ENCODE measurements at regions of chr7 and their contacts with region 1.

Region 1: DNA sequence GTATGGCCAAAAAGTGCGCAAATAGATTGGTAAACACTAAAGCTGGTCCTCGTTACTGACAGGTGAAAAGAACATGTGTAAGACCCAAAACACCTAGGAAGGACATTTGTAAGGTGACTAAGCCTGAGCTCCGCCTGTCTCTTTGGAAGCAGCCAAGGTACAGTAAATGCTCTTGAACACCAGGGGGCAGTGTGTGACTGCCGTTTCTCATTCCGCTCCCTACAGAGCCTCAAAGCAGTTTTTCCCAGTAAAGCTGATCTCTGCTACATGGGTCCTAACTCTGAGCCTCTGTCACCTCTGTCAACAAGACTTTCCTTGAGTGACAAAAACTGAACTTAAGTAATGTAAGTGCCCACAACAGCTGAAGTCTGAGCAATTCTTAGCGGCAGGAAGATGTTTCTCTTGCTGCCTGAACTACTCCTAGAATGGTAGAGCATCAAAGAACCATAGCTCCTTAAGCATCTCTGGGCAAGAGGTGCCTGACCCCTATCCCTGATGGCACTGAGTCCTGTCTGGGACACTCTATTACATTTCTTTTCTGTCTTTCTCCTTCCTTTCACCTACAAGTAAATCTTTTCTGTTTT is 238.0 kb upstream of the INHBA start:
- DNase-seq: peak; percentile 35
- ATAC-seq: peak; percentile 67
- H3K4me3 Mint-ChIP-seq: peak overlapping the region; percentile 51
- H3K27ac Mint-ChIP-seq: no peak overlapping the region
- H3K4me1 Mint-ChIP-seq: peaks cover 27% of the 10 kb centered on the region
- H3K27me3 Mint-ChIP-seq: peaks cover 5% of the 10 kb centered on the region
- CTCF ChIP-seq: no peak

Region 2: GRCh38 chr7:40329601-40330153 is 1611.2 kb before region 1 on chr7:
- CTCF ChIA-PET with region 1: no interaction called
- POLR2A ChIA-PET with region 1: no interaction called
- intact Hi-C with region 1: loop called (anchors 1 kb)
- DNase-seq: no peak
- ATAC-seq: peak; percentile 31
- H3K4me3 Mint-ChIP-seq: no peak overlapping the region
- H3K27ac Mint-ChIP-seq: no peak overlapping the region
- H3K4me1 Mint-ChIP-seq: no peaks in the 10 kb centered on the region
- H3K27me3 Mint-ChIP-seq: no peaks in the 10 kb centered on the region
- CTCF ChIP-seq: no peak

Region 3: GRCh38 chr7:41916450-41916959 is 24.3 kb before region 1 on chr7:
- CTCF ChIA-PET with region 1: interaction called, 14 read pairs
- POLR2A ChIA-PET with region 1: no interaction called
- intact Hi-C with region 1: no loop called
- DNase-seq: no peak
- ATAC-seq: no peak
- H3K4me3 Mint-ChIP-seq: no peak overlapping the region
- H3K27ac Mint-ChIP-seq: no peak overlapping the region
- H3K4me1 Mint-ChIP-seq: peaks cover 2% of the 10 kb centered on the region
- H3K27me3 Mint-ChIP-seq: no peaks in the 10 kb centered on the region
- CTCF ChIP-seq: no peak

Region 4: DNA sequence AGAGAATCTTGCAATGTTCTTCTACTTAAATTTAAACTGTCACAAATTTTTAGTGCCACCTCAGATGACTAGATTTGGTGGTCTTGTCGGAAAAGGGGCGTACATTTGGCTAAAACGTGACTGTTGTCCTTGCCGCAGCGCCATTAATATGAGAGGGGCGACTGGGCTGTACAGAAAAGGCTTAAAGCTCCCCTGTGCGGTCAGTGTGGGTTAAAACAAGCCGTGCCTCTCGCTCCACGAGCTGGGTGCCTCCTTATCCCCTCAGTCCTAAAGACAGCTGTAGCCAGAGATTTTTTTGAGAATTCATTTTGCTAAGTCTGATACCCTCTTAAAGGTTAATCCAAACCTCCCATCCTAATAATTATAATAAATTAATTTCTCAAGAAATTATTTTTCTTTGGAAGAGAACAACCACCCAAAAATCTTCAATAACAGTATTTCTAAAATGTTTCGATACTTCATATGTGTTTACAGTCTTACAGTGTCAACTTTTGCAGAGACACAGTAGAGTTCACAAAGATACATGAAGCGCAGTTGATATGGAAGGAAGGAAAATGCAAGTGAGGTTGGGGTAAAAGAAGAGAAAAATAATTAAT is 902.5 kb after region 1 on chr7:
- CTCF ChIA-PET with region 1: interaction called, 4 read pairs
- POLR2A ChIA-PET with region 1: no interaction called
- intact Hi-C with region 1: loop called (anchors 1 kb)
- DNase-seq: no peak
- ATAC-seq: no peak
- H3K4me3 Mint-ChIP-seq: no peak overlapping the region
- H3K27ac Mint-ChIP-seq: no peak overlapping the region
- H3K4me1 Mint-ChIP-seq: no peaks in the 10 kb centered on the region
- H3K27me3 Mint-ChIP-seq: peaks cover 27% of the 10 kb centered on the region
- CTCF ChIP-seq: no peak

Region 5: DNA sequence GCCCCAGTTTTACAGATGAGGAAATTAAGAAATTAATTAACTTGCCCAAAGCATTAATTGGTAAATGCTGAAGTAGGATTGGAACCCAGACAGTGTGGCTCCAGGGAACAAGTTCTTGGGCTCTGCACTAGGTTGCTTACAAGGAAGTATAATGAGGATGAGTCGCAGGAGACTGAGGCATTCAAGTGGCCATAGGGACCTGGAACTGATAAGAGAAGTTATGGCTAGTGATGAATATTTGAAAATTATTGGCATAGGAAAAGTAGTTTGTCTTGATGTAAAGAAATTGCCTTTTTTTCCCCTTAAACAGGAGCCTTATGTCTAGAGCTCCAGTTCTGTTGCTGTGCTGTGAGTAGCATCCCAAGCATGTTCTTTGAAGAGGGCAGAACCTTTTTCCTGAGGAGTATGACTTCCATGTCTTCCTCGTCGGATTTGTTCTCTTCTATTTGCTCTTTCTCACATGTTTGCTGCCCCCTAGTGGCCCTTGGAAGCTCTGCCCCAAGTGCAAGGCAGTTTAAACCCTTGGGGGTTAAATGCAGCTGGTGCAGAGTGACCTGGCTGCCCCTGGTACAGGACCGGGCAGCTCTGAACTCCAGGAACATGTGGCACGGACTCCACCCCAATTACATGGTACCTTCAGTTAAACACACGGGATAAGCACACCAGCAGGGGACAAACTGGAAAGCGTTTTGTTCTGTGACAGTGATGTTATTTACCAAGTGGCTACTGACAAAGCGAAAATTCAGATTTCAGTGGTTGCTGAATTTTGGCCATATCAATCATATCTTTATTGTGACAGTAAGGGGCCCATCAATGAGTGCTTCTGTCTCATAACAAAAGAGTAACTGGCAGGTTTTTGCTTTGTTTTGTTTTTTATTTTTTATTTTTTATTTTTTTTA is 1320.4 kb after region 1 on chr7:
- CTCF ChIA-PET with region 1: interaction called, 4 read pairs
- POLR2A ChIA-PET with region 1: no interaction called
- intact Hi-C with region 1: loop called (anchors 1 kb)
- DNase-seq: peak; percentile 47
- ATAC-seq: peak; percentile 58
- H3K4me3 Mint-ChIP-seq: no peak overlapping the region
- H3K27ac Mint-ChIP-seq: no peak overlapping the region
- H3K4me1 Mint-ChIP-seq: no peaks in the 10 kb centered on the region
- H3K27me3 Mint-ChIP-seq: peaks cover 5% of the 10 kb centered on the region
- CTCF ChIP-seq: no peak

Region 6: GRCh38 chr7:43721193-43721806 is 1780.4 kb after region 1 on chr7:
- CTCF ChIA-PET with region 1: no interaction called
- POLR2A ChIA-PET with region 1: no interaction called
- intact Hi-C with region 1: loop called (anchors 1 kb)
- DNase-seq: no peak
- ATAC-seq: peak; percentile 25
- H3K4me3 Mint-ChIP-seq: no peak overlapping the region
- H3K27ac Mint-ChIP-seq: no peak overlapping the region
- H3K4me1 Mint-ChIP-seq: peaks cover 16% of the 10 kb centered on the region
- H3K27me3 Mint-ChIP-seq: no peaks in the 10 kb centered on the region
- CTCF ChIP-seq: peak; percentile 61

Measured in activated B cell treated with CpG ODN at 0.5 μM for 24 hours (primary cell).